Activated CD4-positive, alpha-beta memory T cell treated with anti-CD3 and anti-CD28 coated beads, Interleukin-2, amount 10 ng/mL, durations not matched to agents 7 days and 5 days (primary cell): ENCODE measurements at regions of chrX and their contacts with region 1.

Region 1: GRCh38 chrX:65697915-65698796 is 30.7 kb downstream of the MSN start:
- DNase-seq: peak; percentile 81
- H3K4me3 Mint-ChIP-seq: peak overlapping the region; percentile 69
- H3K27ac Mint-ChIP-seq: peak overlapping the region; percentile 91
- H3K4me1 Mint-ChIP-seq: peaks cover 92% of the 10 kb centered on the region
- H3K27me3 Mint-ChIP-seq: no peaks in the 10 kb centered on the region

Region 2: DNA sequence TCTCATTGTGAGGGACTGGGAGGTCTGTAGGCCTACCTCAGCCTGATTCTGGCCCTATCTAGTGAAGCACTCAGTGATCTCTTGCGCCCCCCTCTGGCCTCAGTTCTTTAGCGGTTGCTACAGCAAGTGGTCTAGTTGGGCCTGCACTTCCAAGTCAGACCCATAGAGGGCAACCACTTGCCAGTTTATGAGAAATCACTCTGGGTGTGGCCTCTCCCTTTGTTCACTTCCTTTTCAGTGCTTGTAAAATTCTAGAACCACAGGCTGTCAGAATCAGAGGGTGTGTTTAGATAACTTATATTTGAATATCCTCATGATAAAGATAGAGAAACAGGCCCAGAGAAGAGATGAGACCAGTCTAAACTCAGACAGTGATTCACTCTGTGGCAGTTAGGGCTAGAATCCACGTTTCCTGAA is 102.7 kb before region 1 on chrX:
- CTCF ChIA-PET with region 1: interaction called, 13 read pairs
- POLR2A ChIA-PET with region 1: interaction called, 12 read pairs
- DNase-seq: peak; percentile 93
- H3K4me3 Mint-ChIP-seq: peak overlapping the region; percentile 62
- H3K27ac Mint-ChIP-seq: peak overlapping the region; percentile 94
- H3K4me1 Mint-ChIP-seq: peaks cover 56% of the 10 kb centered on the region
- H3K27me3 Mint-ChIP-seq: no peaks in the 10 kb centered on the region

Region 3: DNA sequence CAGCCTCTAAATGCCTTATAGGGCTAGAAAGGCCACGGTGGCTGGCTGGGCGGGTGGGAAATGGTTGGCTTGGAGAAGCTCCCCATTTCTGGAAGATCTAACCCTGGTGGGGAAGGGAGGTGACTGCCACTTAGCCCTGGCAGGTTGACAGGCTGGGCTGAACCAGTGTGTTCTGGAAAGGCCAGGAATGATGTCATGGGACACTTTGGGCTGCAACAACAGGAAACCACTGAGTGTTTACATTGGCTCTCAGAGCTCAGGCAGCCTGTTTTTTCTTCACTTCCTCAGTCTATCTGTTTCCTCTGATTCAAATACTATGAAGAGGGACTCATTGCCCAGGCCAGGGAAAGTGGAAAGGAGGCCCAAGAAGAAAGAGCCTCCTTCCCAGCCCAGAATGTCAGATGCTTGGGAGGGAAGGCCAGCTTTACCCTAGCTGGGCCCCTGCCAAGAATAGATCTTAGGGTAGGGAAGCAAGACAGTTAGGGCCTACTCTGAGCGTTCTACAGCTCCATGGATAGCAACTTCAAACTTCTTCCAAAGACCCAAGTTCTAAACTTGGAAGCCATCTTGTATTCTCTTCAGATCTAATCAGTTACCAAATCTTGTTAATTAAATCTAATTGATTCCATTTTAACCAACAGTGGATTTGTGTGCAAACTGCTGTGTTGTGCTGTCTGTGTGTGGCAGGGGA is 96.5 kb before region 1 on chrX:
- CTCF ChIA-PET with region 1: interaction called, 13 read pairs
- POLR2A ChIA-PET with region 1: interaction called, 15 read pairs
- DNase-seq: peak; percentile 67
- H3K4me3 Mint-ChIP-seq: peak overlapping the region; percentile 48
- H3K27ac Mint-ChIP-seq: peak overlapping the region; percentile 94
- H3K4me1 Mint-ChIP-seq: peaks cover 69% of the 10 kb centered on the region
- H3K27me3 Mint-ChIP-seq: no peaks in the 10 kb centered on the region

Region 4: GRCh38 chrX:65667503-65668376 is 30.4 kb before region 1 on chrX and contains the start of gene MSN:
- CTCF ChIA-PET with region 1: interaction called, 6 read pairs
- POLR2A ChIA-PET with region 1: interaction called, 69 read pairs
- DNase-seq: peak; percentile 82
- H3K4me3 Mint-ChIP-seq: peak within 1 kb of the TSS; percentile 91
- H3K27ac Mint-ChIP-seq: peak within 1 kb of the TSS; percentile 89
- H3K4me1 Mint-ChIP-seq: peaks cover 38% of the 10 kb centered on the region
- H3K27me3 Mint-ChIP-seq: no peaks in the 10 kb centered on the region
- total RNA-seq, gene MSN: 632 to 637 TPM

Region 5: GRCh38 chrX:65674204-65674893 is 23.8 kb before region 1 on chrX:
- CTCF ChIA-PET with region 1: interaction called, 6 read pairs
- POLR2A ChIA-PET with region 1: interaction called, 69 read pairs
- DNase-seq: peak; percentile 34
- H3K4me3 Mint-ChIP-seq: peak overlapping the region; percentile 91
- H3K27ac Mint-ChIP-seq: peak overlapping the region; percentile 83
- H3K4me1 Mint-ChIP-seq: peaks cover 73% of the 10 kb centered on the region
- H3K27me3 Mint-ChIP-seq: no peaks in the 10 kb centered on the region

Region 6: DNA sequence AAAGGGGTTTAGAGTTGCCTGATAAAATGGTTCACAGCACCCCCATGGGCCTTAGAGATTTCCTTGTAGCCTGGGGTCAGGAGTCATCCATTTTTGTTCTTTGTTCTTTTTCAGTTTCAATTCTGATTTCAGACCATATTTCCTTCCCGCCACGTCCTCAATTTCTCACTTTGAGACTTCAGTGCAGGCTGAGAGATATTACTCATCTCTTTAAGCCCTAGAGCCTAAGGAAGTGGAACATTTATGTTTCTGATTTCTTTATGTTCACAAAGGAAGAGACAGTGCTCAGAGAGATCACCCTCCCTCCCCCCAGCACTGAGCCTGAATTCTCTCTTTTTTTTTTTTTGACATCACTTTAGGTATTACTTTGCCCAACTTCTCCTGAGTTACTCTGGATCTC is 25.6 kb after region 1 on chrX:
- CTCF ChIA-PET with region 1: interaction called, 15 read pairs
- POLR2A ChIA-PET with region 1: interaction called, 14 read pairs
- DNase-seq: peak; percentile 48
- H3K4me3 Mint-ChIP-seq: peak overlapping the region; percentile 49
- H3K27ac Mint-ChIP-seq: peak overlapping the region; percentile 94
- H3K4me1 Mint-ChIP-seq: peaks cover 91% of the 10 kb centered on the region
- H3K27me3 Mint-ChIP-seq: no peaks in the 10 kb centered on the region

Region 7: DNA sequence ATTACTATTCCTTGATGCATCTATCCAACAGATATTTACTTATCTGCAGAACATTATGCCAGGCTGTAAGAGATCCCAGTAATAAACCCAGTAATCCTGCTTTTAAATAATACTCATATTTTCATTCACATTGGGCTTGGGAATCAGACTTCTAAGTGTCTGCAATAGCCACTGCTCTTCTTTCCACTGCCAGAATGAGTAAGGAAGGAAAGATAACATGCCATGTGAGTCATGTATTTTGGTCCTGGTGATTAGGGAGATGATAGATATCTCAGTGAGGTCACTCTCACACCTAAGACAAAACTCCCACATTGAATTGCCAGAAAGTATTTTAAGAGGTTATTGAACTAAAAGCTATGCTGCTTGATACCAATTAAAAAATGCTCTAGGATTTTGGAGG is 452.0 kb after region 1 on chrX:
- CTCF ChIA-PET with region 1: no interaction called
- POLR2A ChIA-PET with region 1: no interaction called
- DNase-seq: no peak
- H3K4me3 Mint-ChIP-seq: no peak overlapping the region
- H3K27ac Mint-ChIP-seq: no peak overlapping the region
- H3K4me1 Mint-ChIP-seq: no peaks in the 10 kb centered on the region
- H3K27me3 Mint-ChIP-seq: no peaks in the 10 kb centered on the region